Activated CD8-positive, alpha-beta T cell treated with anti-CD3 and anti-CD28 coated beads, Interleukin-2, amount 10 ng/mL, durations not matched to agents 7 days and 5 days (primary cell): ENCODE measurements at regions of chr6 and their contacts with region 1.

Region 1: DNA sequence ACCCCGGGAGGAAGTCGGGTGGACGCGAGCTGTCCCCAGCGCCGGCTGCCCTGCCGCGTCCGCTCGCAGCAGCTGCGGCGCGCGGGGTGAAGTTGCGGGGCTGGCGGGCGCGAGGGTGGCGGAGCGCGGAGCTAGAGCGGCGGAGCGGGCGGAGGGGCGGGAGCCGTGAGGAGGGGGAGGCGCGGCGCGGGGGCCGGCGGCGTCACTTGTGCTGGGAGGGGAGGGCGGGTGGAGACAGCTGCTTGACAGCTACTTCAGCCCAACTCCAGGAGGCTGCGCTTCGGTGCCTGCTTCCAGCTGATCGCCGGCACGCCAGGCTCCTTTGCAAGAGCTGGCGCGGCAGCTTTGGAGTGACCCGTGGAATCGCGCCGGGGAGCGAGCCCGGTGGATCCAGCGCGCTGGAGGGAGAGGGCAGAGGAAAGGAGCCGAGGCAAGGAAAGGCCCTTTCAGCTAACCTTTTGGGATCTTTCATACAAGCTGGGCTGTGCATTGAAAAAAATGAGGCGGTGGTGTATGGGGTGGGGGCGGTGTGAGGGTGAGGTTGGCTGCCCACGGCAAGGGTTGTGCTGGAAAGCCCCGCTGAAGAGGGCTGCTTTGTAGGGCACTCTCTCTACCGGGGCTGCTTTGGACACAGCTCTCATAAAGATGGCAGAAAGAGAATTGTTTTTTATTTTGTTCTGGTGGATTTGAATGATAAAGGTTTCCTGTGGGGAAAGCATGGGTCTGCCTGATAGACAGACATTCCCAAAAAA is 24.6 kb downstream of the RIPOR2 start:
- DNase-seq: no peak
- ATAC-seq: peak; percentile 42
- H3K4me3 Mint-ChIP-seq: peak overlapping the region; percentile 81
- H3K27ac Mint-ChIP-seq: peak overlapping the region; percentile 87
- H3K4me1 Mint-ChIP-seq: peaks cover 94% of the 10 kb centered on the region
- H3K27me3 Mint-ChIP-seq: no peaks in the 10 kb centered on the region

Region 2: DNA sequence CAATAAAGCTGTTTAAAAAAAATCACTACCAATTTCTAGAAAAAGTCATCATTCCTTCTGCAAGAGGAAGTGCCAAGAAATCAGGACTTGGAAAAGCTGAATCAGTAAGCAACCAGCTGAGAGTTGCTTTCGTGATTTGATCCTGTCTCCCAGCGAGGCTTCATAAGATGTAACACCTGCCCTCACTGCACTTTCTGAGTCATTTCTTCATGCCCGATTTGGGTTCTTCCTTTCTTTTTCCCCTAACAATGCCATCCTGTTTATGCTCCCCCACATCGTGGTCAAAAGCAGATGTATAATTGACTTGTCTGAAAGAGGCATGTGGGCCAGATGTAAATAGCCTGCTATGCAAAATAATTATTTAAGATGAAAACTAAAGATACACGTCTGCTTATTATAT is 27.5 kb before region 1 on chr6:
- CTCF ChIA-PET with region 1: interaction called, 11 read pairs
- POLR2A ChIA-PET with region 1: interaction called, 9 read pairs
- DNase-seq: no peak
- ATAC-seq: peak; percentile 74
- H3K4me3 Mint-ChIP-seq: peak overlapping the region; percentile 10
- H3K27ac Mint-ChIP-seq: peak overlapping the region; percentile 36
- H3K4me1 Mint-ChIP-seq: peaks cover 64% of the 10 kb centered on the region
- H3K27me3 Mint-ChIP-seq: no peaks in the 10 kb centered on the region

Region 3: DNA sequence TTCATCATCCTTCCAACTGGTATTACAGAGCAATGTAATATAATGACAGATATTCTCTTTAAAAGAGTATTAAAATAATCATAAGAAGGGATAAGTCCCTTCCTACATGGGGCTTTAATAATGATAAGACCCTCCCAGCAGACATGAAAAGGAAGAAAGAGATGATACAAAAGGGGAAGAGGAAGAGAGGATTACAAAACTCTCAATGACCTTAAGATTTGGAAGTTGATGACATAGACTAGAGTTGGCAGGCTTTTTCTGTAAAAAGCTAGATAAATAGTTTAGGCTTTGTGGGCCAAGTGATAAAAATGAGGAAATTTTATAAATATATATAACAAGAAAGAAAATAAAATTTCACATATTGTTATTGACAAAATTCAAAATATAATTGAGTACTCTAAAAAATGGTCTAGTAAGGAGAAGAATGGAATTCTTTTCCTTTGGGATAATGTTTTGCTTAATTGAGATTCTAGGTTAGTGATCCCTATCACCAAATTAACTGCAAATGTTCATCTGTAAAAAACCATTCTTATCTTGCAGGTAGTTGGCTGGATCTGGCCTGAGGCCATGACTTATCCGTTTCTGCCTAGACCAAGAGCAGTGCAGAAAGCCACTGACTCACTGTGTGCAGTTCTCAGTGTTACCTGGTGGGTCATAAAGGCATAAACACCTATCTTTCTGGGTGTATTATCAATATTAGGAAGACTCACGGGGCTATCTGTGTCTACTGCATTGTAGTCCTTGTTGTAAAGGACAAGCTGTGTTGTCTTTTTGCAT is 13.6 kb after region 1 on chr6:
- CTCF ChIA-PET with region 1: interaction called, 74 read pairs
- POLR2A ChIA-PET with region 1: interaction called, 27 read pairs
- DNase-seq: peak; percentile 46
- ATAC-seq: no peak
- H3K4me3 Mint-ChIP-seq: peak overlapping the region; percentile 58
- H3K27ac Mint-ChIP-seq: peak overlapping the region; percentile 81
- H3K4me1 Mint-ChIP-seq: peaks cover 82% of the 10 kb centered on the region
- H3K27me3 Mint-ChIP-seq: no peaks in the 10 kb centered on the region

Region 4: GRCh38 chr6:24949020-24949569 is 38.0 kb after region 1 on chr6:
- CTCF ChIA-PET with region 1: interaction called, 18 read pairs
- POLR2A ChIA-PET with region 1: interaction called, 7 read pairs
- DNase-seq: peak; percentile 87
- ATAC-seq: peak; percentile 69
- H3K4me3 Mint-ChIP-seq: peak overlapping the region; percentile 46
- H3K27ac Mint-ChIP-seq: peak overlapping the region; percentile 94
- H3K4me1 Mint-ChIP-seq: peaks cover 74% of the 10 kb centered on the region
- H3K27me3 Mint-ChIP-seq: no peaks in the 10 kb centered on the region